Spleen (tissue), 13 donors: ENCODE measurements at regions of chr3 and their contacts with region 1.

Region 1: GRCh38 chr3:148861277-148861869 is 3.7 kb upstream of the CPA3 start:
- DNase-seq: no peak
- H3K4me3 ChIP-seq: no peak overlapping the region
- H3K27ac ChIP-seq: no peak overlapping the region
- H3K4me1 ChIP-seq: no peaks in the 10 kb centered on the region
- H3K27me3 ChIP-seq: no peaks in the 10 kb centered on the region
- CTCF ChIP-seq: peak; percentile 22 to 77 (median 63)
- POLR2A ChIP-seq: no peak

Region 2: DNA sequence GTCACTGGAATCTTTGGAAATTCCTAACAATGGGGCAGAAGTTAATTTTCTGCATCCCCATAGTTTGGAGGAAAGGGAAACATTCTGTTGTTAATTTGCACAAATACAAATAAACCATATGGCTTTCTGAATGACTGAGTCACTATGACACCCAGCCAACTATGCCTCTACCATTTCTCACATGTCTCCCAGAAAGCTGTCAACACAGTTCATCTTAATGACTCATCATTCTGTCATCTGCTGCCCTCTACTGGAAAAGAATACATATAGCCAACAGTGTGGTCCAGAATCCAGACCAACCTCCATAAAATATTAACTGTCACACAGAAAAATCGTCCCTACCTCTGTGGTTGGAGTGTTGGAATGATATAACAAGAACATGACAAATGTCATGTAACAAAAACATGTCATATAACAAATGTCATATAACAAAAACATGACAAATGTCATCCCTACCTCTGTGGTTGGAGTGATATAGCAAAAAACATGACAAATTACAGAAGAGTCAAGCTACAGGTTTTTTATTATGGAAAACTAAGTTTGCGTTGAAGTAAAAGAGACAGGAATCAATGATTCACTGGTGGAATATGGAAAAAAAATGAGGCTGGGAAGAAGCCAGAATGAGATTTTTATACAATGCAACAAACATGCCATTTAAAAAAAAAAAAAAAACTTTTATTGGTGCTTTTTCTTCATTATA is 82.3 kb after region 1 on chr3:
- intact Hi-C with region 1: loop called (anchors 5 kb)
- DNase-seq: no peak
- H3K4me3 ChIP-seq: no peak overlapping the region
- H3K27ac ChIP-seq: no peak overlapping the region
- H3K4me1 ChIP-seq: no peaks in the 10 kb centered on the region
- H3K27me3 ChIP-seq: no peaks in the 10 kb centered on the region
- CTCF ChIP-seq: peak; percentile 39 to 82 (median 70)
- POLR2A ChIP-seq: no peak

Region 3: GRCh38 chr3:150079029-150079739 is 1217.8 kb after region 1 on chr3:
- intact Hi-C with region 1: no loop called
- DNase-seq: no peak
- H3K4me3 ChIP-seq: no peak overlapping the region
- H3K27ac ChIP-seq: no peak overlapping the region
- H3K4me1 ChIP-seq: peaks cover 0 to 4% (median 0%) of the 10 kb centered on the region in 6 donors
- H3K27me3 ChIP-seq: no peaks in the 10 kb centered on the region
- CTCF ChIP-seq: no peak
- POLR2A ChIP-seq: no peak